ENCODE measurements at regions of chr18 and their contacts with region 1.

Region 1: DNA sequence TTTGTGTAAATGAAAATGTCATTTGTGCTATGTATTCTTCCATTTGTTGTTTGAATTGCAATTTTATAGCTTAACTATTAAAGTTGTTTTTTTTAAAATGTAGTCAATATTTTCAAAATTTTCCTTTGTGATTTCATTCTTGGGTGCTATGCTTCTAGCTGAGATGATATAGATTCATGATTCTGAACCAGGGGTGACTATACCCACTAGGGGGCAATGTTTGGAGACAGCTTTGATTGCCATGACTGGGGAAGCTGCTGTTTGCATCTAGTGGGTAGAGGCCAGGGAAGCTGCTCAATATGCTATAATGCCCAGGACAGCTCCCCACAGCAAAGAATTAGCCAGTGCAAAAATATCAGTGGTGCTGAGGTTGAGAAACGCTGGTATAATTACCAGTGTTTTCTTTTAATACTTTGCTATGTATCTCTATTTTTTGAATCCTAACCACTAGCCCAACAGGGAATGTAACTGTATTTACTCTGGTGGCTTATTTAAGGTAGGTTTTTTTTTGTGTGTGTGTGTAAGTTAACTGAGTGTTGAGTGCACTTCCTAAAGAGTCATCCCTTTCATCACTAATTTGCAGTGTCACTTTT is 99.7 kb downstream of the MEP1B start:
- DNase-seq: peak; percentile 36
- H3K4me3 ChIP-seq: no peak overlapping the region
- H3K27ac ChIP-seq: no peak overlapping the region
- H3K27me3 ChIP-seq: no peaks in the 10 kb centered on the region
- CTCF ChIP-seq: peak; percentile 89

Region 2: DNA sequence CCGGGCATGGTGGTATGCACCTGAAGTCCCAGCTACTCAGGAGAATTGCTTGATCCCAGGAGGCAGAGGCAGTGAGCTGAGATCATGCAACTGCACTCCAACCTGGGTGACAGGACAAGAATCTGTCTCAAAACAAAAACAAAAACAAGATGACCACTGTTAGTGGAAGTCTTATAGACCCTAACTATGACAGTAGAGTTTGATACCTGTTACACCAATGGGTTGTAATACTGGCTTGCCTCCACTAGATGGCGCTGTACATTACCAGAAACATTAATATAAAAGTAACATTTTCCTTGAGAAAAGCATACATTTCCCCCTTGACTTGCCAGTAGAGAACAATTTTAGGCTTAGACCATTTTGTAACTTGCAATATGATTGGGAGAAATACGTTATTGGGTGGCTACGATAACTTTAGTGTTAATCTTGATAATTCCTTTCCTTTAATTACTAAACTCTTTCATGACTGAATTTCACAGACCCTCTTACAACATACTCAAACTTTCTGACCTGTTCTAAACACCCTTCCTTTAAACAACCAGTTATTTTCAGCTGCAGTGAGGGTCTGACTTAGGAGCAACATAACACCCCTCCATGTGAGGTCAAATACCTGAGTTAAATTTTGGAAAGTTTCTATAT is 548.4 kb before region 1 on chr18:
- CTCF ChIA-PET with region 1: no interaction called
- POLR2A ChIA-PET with region 1: no interaction called
- DNase-seq: peak; percentile 2
- H3K4me3 ChIP-seq: no peak overlapping the region
- H3K27ac ChIP-seq: no peak overlapping the region
- H3K27me3 ChIP-seq: no peaks in the 10 kb centered on the region
- CTCF ChIP-seq: peak; percentile 82

Region 3: GRCh38 chr18:31957728-31958127 is 331.9 kb before region 1 on chr18:
- CTCF ChIA-PET with region 1: no interaction called
- POLR2A ChIA-PET with region 1: no interaction called
- DNase-seq: no peak
- H3K4me3 ChIP-seq: no peak overlapping the region
- H3K27ac ChIP-seq: no peak overlapping the region
- H3K27me3 ChIP-seq: no peaks in the 10 kb centered on the region
- CTCF ChIP-seq: no peak

Region 4: GRCh38 chr18:32257084-32257785 is 32.3 kb before region 1 on chr18:
- CTCF ChIA-PET with region 1: no interaction called
- POLR2A ChIA-PET with region 1: no interaction called
- DNase-seq: no peak
- H3K4me3 ChIP-seq: no peak overlapping the region
- H3K27ac ChIP-seq: no peak overlapping the region
- H3K27me3 ChIP-seq: peaks cover 2% of the 10 kb centered on the region
- CTCF ChIP-seq: no peak

Region 5: DNA sequence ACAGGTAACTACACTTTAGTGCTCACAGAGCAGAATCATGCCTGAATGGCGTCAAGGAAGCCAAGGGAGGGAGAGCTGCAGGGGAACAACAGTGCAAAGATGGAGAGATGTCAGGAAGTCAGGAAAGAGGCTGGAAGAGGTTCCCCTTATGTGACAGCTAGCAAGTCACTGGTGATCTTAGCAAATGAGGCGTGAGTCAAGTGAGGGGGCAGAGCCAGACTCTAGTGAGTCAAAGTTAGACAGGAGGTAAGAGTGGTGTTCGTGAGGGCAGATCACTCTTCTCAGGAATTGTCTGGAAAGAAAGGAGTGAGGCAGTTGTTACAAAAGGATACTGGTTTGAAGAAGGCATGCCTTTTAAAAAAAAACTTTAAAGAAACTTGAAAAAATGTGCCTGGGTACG is 12.7 kb before region 1 on chr18:
- CTCF ChIA-PET with region 1: interaction called, 73 read pairs
- POLR2A ChIA-PET with region 1: no interaction called
- DNase-seq: no peak
- H3K4me3 ChIP-seq: no peak overlapping the region
- H3K27ac ChIP-seq: no peak overlapping the region
- H3K27me3 ChIP-seq: no peaks in the 10 kb centered on the region
- CTCF ChIP-seq: no peak

Region 6: DNA sequence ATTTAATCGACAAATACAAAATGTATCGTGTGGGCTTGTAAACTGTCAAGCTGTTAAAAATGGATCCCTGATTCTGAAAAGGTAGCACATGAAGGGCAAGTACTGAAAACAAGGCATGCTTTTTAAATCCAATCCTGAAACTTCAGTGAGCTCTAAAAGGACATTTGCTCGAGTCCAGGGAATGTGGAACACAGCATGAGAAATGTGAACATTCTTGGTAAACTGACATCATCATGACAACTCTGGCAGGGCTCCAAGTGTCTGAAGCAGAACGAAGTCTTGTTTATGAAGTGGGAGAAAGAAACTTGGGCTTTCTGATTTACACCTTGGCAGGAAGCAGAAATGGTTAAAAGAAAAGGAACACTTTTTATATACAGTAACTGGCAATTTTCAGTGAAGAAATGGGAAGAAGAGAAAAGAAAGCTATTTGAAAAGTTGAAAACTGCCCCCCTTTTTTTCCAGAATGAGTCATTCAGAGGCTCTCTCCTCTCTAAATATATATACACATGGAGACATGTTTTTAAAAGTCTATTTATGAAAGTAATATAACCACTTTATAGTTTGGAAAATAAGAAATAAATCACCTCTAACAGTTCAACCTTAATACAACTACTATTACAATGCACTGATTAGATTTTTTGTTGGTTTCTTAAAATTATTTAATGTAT is 60.3 kb after region 1 on chr18:
- CTCF ChIA-PET with region 1: interaction called, 11 read pairs
- POLR2A ChIA-PET with region 1: no interaction called
- DNase-seq: peak; percentile 87
- H3K4me3 ChIP-seq: peak overlapping the region; percentile 50
- H3K27ac ChIP-seq: peak overlapping the region; percentile 53
- H3K27me3 ChIP-seq: no peaks in the 10 kb centered on the region
- CTCF ChIP-seq: no peak

Region 7: GRCh38 chr18:32439802-32440201 is 150.2 kb after region 1 on chr18:
- CTCF ChIA-PET with region 1: interaction called, 11 read pairs
- POLR2A ChIA-PET with region 1: no interaction called
- DNase-seq: no peak
- H3K4me3 ChIP-seq: no peak overlapping the region
- H3K27ac ChIP-seq: no peak overlapping the region
- H3K27me3 ChIP-seq: no peaks in the 10 kb centered on the region
- CTCF ChIP-seq: peak; percentile 23

Region 8: GRCh38 chr18:32542221-32542798 is 252.7 kb after region 1 on chr18:
- CTCF ChIA-PET with region 1: interaction called, 10 read pairs
- POLR2A ChIA-PET with region 1: no interaction called
- DNase-seq: no peak
- H3K4me3 ChIP-seq: no peak overlapping the region
- H3K27ac ChIP-seq: no peak overlapping the region
- H3K27me3 ChIP-seq: no peaks in the 10 kb centered on the region
- CTCF ChIP-seq: no peak

Measured in AG04450 (cell line).